Activated CD4-positive, alpha-beta T cell treated with anti-CD3 and anti-CD28 coated beads, Interleukin-2, amount 10 ng/mL, durations not matched to agents 24 days and 14 days (primary cell): ENCODE measurements at regions of chr3 and their contacts with region 1.

Region 1: DNA sequence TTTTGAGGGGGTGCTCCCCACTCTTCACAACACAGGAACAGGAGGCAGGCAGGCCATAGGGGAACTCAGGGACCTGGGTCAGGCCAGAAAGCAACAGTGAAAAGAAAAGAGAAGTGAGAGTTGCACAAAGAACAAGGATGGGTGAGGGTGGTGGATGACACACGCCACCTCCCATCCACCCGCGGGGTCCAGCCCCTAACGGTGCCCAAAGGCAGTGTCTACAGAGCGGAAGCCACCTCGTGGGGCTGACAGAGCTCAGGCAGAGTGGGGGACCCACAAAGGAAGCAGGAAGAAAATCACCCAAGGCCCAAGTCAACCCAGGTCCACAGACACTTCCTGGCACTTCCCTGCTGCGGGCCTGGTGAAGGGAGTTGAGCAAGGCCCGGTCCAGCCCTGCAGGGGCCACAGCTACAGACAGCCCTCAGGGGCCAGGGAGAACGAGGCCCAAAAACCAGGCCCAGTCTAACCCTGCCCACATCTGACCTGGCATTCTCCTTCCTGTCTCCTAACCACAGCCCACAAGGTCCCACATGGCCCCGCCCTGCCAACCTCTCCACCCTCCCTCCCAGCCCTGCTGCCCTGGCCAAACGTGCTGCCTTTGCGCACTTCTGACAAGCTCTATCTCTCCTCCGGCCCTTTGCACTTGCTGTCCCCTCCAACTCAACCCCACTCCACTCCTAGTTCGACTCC is 5.9 kb downstream of the NUP210 start:
- DNase-seq: peak; percentile 89
- H3K4me3 Mint-ChIP-seq: peak overlapping the region; percentile 81
- H3K27ac Mint-ChIP-seq: peak overlapping the region; percentile 87
- H3K4me1 Mint-ChIP-seq: peaks cover 48% of the 10 kb centered on the region
- H3K27me3 Mint-ChIP-seq: no peaks in the 10 kb centered on the region

Region 2: DNA sequence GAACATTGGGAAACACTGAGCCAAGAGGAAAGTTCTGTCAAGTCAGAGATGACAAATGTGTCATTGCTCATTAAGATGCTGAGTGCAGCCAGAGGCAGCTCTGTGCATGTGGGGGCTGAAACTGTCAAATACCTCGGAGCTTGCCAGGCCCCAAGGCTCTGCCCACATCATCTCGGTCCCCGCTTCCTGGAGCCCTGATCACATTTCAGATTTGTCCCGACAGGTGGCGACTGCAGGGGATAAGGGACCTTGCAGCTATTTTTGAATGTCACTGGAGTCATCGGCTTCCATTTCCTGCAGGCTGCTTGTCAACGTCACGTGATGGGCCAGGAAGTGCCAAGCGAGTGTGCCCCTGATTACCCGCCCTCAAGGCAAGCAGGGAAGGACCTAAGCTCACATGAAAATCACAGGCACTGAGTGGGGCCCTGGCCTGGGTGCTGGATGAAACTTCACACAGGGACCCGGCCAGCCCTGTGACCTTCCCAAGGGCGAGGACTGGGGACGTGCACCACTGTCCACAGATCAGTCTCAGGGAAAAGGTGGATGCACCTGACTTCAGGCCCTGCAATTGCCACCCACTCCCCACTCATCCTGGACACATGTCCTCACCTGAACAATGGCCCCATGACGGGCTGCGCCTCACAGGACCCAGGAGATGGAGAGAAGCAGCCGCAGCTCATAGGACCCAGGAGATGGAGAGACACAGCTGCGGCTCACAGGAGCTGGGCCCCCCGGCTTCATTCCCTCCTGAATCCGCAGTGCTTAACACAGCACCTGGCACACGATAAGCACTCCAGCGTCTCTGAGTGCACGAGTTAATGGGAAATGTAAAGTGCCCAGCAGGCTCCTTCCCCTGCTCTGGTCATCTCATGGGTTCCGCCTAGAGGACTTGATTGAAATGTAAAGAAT is 67.5 kb before region 1 on chr3:
- intact Hi-C with region 1: loop called (anchors 2 kb)
- DNase-seq: peak; percentile 91
- H3K4me3 Mint-ChIP-seq: peak overlapping the region; percentile 32
- H3K27ac Mint-ChIP-seq: peak overlapping the region; percentile 75
- H3K4me1 Mint-ChIP-seq: peaks cover 45% of the 10 kb centered on the region
- H3K27me3 Mint-ChIP-seq: no peaks in the 10 kb centered on the region

Region 3: GRCh38 chr3:13401139-13401538 is 13.0 kb before region 1 on chr3:
- intact Hi-C with region 1: no loop called
- DNase-seq: no peak
- H3K4me3 Mint-ChIP-seq: no peak overlapping the region
- H3K27ac Mint-ChIP-seq: no peak overlapping the region
- H3K4me1 Mint-ChIP-seq: peaks cover 7% of the 10 kb centered on the region
- H3K27me3 Mint-ChIP-seq: no peaks in the 10 kb centered on the region

Region 4: GRCh38 chr3:13479581-13480339 is 65.6 kb after region 1 on chr3 and contains the start of gene HDAC11:
- intact Hi-C with region 1: loop called (anchors 2 kb)
- DNase-seq: peak; percentile 100
- H3K4me3 Mint-ChIP-seq: peak within 1 kb of the TSS; percentile 91
- H3K27ac Mint-ChIP-seq: peak within 1 kb of the TSS; percentile 88
- H3K4me1 Mint-ChIP-seq: peaks cover 8% of the 10 kb centered on the region
- H3K27me3 Mint-ChIP-seq: peaks cover 10% of the 10 kb centered on the region
- total RNA-seq, gene HDAC11: 1.5 and 2.1 TPM in 2 replicates